Breast epithelium (tissue), 4 donors: ENCODE measurements at regions of chr20 and their contacts with region 1.

Region 1: GRCh38 chr20:3282271-3283221 is 43.6 kb upstream of the SLC4A11 start:
- DNase-seq: peak in 1 of 2 donors; percentile 61
- H3K4me3 ChIP-seq: no peak overlapping the region
- H3K27ac ChIP-seq: peak overlapping the region in 1 of 2 donors; percentile 4
- H3K4me1 ChIP-seq: no peaks in the 10 kb centered on the region
- H3K27me3 ChIP-seq: no peaks in the 10 kb centered on the region
- CTCF ChIP-seq: no peak
- POLR2A ChIP-seq: no peak

Region 2: GRCh38 chr20:3349786-3350185 is 67.2 kb after region 1 on chr20:
- intact Hi-C with region 1: loop called (anchors 2 kb)
- DNase-seq: no peak
- H3K4me3 ChIP-seq: no peak overlapping the region
- H3K27ac ChIP-seq: no peak overlapping the region
- H3K4me1 ChIP-seq: no peaks in the 10 kb centered on the region
- H3K27me3 ChIP-seq: no peaks in the 10 kb centered on the region
- CTCF ChIP-seq: no peak
- POLR2A ChIP-seq: no peak